Heart right ventricle (tissue), 16 donors: ENCODE measurements at regions of chr19 and their contacts with region 1.

Region 1: GRCh38 chr19:11496391-11497163 is 9.1 kb downstream of the ZNF653 start:
- DNase-seq: peak; percentile 36 to 61
- ATAC-seq: peak in 6 of 8 donors; percentile 42 to 71 (median 59)
- H3K4me3 ChIP-seq: no peak overlapping the region
- H3K27ac ChIP-seq: no peak overlapping the region
- H3K4me1 ChIP-seq: no peaks in the 10 kb centered on the region
- H3K27me3 ChIP-seq: no peaks in the 10 kb centered on the region
- CTCF ChIP-seq: peak; percentile 43 to 74 (median 63)

Region 2: DNA sequence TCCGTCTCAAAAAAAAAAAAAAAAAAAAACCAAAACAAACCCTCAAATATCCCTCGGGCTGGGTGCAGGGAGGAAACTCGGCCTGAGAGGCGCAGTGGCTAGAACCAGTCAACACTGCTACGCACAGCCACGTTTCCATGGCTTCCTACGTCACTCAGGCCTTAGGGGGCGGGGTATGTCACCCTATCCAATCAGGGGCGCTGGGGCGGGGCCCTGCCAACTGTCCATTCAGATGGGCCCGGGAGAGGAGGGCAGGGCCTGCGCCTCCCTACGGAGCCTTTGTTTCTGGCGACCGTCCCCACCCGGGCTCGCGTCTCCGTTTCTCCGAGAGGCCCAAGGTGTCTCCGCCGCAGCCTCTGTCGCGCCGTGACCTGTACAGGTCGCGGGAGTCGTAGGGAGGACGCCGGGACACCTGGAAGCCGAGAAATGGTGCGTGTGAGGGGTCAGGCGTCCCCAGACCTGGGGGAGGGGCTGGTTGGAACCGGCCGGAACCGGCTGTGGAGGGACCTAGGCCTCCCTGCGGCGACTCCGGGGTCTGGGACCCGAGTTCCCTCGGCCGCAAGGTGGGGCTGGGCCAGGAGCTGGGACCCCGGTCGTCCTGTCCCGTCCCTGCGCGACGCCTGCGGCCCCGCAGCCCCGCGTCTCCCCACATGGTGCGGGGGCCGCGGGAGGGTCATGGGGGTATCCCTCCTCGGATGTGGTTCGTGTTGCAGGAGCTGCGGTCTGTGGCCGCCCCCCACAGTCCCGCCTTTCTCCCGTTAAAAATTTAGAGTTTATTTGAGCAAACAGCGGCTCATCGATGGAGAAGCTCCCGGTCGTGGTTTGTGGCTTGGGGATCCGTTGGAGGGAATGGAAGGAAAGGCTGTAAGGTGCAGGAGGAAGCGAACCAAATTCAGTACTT is 100.9 kb after region 1 on chr19 and contains the start of gene ZNF627:
- intact Hi-C with region 1: loop called in 1 of 10 experiments (anchors 5 kb)
- DNase-seq: peak; percentile 98 to 100
- ATAC-seq: peak; percentile 99 to 100 (median 100)
- H3K4me3 ChIP-seq: peak within 1 kb of the TSS; percentile 78 to 100 (median 92)
- H3K27ac ChIP-seq: peak within 1 kb of the TSS; percentile 86 to 98 (median 92)
- H3K4me1 ChIP-seq: peaks cover 4 to 34% (median 19%) of the 10 kb centered on the region in 9 donors
- H3K27me3 ChIP-seq: no peaks in the 10 kb centered on the region
- CTCF ChIP-seq: peak in 6 of 9 donors; percentile 16 to 42 (median 32)
- total RNA-seq, gene ZNF627: 5.3 to 9.8 (median 6.7) TPM